Common myeloid progenitor, CD34-positive (primary cell): ENCODE measurements at regions of chr10 and their contacts with region 1.

Region 1: DNA sequence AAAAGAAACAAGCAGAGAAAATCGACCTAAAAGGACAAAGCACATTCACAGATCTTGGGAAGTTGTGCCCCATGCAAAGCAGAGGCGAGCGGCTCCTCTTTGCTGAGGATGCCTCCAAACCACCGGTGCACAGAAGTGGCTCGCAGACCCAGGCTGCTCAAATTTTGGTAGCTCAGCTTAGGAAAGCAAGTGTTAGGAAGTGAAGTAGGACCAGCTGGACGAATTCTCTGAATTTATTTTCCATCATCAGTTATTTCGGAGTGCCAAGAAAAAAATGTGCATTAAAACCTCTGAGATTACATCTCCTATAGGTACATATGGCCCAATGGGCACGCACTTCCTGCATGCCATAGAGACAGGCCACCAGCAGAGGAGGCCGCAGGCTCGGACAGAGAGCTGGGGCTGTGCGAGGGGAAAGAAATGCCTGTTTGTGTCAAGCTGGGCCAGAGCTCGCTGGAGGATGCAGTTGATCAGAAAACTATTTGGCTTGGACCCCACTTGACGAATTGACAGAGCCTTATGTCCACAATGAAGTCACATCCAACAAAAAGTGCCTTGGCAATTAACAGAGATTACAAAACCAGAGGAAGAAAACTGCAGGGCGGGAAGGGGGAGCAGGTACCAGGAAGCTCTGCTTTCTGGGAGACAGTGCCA is 122.3 kb upstream of the LYZL2 start:
- DNase-seq: peak; percentile 51 to 84 (median 52)
- H3K4me3 ChIP-seq: no peak overlapping the region
- H3K27ac ChIP-seq: peak overlapping the region in 1 of 2 experiments; percentile 12
- H3K4me1 ChIP-seq: peaks cover 14 to 66% (median 47%) of the 10 kb centered on the region in 4 experiments
- H3K27me3 ChIP-seq: no peaks in the 10 kb centered on the region

Region 2: GRCh38 chr10:30736685-30737232 is 15.0 kb before region 1 on chr10:
- CTCF ChIA-PET with region 1: interaction called, 19 read pairs
- POLR2A ChIA-PET with region 1: no interaction called
- DNase-seq: peak; percentile 60 to 92 (median 89)
- H3K4me3 ChIP-seq: no peak overlapping the region
- H3K27ac ChIP-seq: peak overlapping the region; percentile 53 to 70
- H3K4me1 ChIP-seq: peaks cover 0 to 41% (median 31%) of the 10 kb centered on the region in 4 experiments
- H3K27me3 ChIP-seq: no peaks in the 10 kb centered on the region

Region 3: GRCh38 chr10:30763918-30764317 is 12.1 kb after region 1 on chr10:
- CTCF ChIA-PET with region 1: interaction called, 17 read pairs
- POLR2A ChIA-PET with region 1: no interaction called
- DNase-seq: peak in 2 of 3 donors; percentile 80 to 88
- H3K4me3 ChIP-seq: peak overlapping the region in 3 of 7 experiments; percentile 16 to 33 (median 31)
- H3K27ac ChIP-seq: peak overlapping the region in 1 of 2 experiments; percentile 65
- H3K4me1 ChIP-seq: peaks cover 2 to 33% (median 17%) of the 10 kb centered on the region in 4 experiments
- H3K27me3 ChIP-seq: no peaks in the 10 kb centered on the region

Region 4: GRCh38 chr10:30775779-30776591 is 24.2 kb after region 1 on chr10:
- CTCF ChIA-PET with region 1: interaction called, 56 read pairs
- POLR2A ChIA-PET with region 1: no interaction called
- DNase-seq: no peak
- H3K4me3 ChIP-seq: no peak overlapping the region
- H3K27ac ChIP-seq: no peak overlapping the region
- H3K4me1 ChIP-seq: no peaks in the 10 kb centered on the region
- H3K27me3 ChIP-seq: peaks cover 0 to 6% (median 0%) of the 10 kb centered on the region in 5 experiments

Region 5: GRCh38 chr10:31051703-31052102 is 299.9 kb after region 1 on chr10:
- CTCF ChIA-PET with region 1: no interaction called
- POLR2A ChIA-PET with region 1: no interaction called
- DNase-seq: no peak
- H3K4me3 ChIP-seq: no peak overlapping the region
- H3K27ac ChIP-seq: no peak overlapping the region
- H3K4me1 ChIP-seq: no peaks in the 10 kb centered on the region
- H3K27me3 ChIP-seq: no peaks in the 10 kb centered on the region